Activated CD8-positive, alpha-beta T cell treated with anti-CD3 and anti-CD28 coated beads, Interleukin-2, amount 10 ng/mL, durations not matched to agents 7 days and 5 days (primary cell): ENCODE measurements at regions of chr19 and their contacts with region 1.

Region 1: DNA sequence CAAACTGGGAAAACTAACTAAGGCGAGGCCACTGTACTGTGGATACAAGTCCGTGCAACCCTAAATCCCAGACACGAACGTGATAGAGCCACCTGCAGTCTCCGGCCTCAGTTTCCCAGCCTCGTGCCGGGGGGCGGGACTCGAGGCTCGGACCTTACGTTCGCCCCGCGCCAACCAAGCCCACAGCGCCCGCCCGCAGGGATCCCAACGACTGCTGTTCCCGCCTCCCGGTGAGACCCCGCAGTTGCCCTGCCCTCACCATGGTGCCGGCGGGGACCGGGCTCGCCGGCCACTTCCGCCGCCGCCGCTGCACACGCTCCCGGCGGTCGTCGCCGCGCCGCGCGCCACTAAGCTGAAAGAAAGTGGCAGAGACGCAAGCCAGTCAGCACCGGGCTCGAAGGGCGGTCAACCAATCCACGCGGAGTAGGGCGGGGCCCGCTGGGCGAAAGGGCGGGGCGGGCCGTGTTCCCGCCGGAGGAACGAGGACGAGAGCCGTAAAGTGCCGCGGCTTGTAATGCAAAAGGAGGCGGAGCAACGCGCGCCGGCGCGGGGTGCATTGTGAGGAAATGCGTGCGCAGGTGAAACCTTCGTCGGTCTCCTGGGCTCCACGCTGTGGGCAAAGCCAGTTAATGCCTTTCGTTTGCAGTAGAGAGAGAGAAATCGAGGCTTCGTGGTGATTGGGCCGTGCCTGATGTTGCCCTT is at the start of gene LSM4:
- DNase-seq: peak; percentile 100
- ATAC-seq: peak; percentile 95
- H3K4me3 Mint-ChIP-seq: peak within 1 kb of the TSS; percentile 92
- H3K27ac Mint-ChIP-seq: peak within 1 kb of the TSS; percentile 93
- H3K4me1 Mint-ChIP-seq: peaks cover 56% of the 10 kb centered on the region
- H3K27me3 Mint-ChIP-seq: no peaks in the 10 kb centered on the region
- total RNA-seq, gene LSM4: 199 to 215 TPM

Region 2: GRCh38 chr19:18304458-18305310 is 18.2 kb before region 1 on chr19:
- CTCF ChIA-PET with region 1: interaction called, 36 read pairs
- POLR2A ChIA-PET with region 1: interaction called, 80 read pairs
- DNase-seq: peak; percentile 87
- ATAC-seq: peak; percentile 74
- H3K4me3 Mint-ChIP-seq: peak overlapping the region; percentile 99
- H3K27ac Mint-ChIP-seq: peak overlapping the region; percentile 94
- H3K4me1 Mint-ChIP-seq: peaks cover 49% of the 10 kb centered on the region
- H3K27me3 Mint-ChIP-seq: no peaks in the 10 kb centered on the region

Region 3: DNA sequence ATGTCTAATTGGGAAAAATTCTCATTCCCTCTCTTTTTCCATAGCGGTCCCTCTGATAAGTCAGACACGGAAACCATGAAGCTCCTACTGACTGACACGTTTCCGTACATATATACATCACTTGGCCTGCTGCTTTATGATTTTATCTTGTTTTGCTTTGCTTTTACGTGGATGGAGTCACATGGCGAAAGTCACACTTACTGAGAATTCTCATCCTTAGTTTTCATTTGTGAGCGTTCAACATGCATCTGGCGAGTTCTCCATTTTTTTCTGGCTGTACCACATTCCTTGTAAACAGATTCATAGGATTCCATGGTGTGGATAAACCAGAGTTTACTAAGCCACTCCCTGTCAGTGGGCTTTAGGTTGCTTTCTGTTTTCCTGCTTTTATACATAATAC is 38.7 kb after region 1 on chr19:
- CTCF ChIA-PET with region 1: no interaction called
- POLR2A ChIA-PET with region 1: no interaction called
- DNase-seq: no peak
- ATAC-seq: no peak
- H3K4me3 Mint-ChIP-seq: no peak overlapping the region
- H3K27ac Mint-ChIP-seq: no peak overlapping the region
- H3K4me1 Mint-ChIP-seq: peaks cover 18% of the 10 kb centered on the region
- H3K27me3 Mint-ChIP-seq: no peaks in the 10 kb centered on the region

Region 4: DNA sequence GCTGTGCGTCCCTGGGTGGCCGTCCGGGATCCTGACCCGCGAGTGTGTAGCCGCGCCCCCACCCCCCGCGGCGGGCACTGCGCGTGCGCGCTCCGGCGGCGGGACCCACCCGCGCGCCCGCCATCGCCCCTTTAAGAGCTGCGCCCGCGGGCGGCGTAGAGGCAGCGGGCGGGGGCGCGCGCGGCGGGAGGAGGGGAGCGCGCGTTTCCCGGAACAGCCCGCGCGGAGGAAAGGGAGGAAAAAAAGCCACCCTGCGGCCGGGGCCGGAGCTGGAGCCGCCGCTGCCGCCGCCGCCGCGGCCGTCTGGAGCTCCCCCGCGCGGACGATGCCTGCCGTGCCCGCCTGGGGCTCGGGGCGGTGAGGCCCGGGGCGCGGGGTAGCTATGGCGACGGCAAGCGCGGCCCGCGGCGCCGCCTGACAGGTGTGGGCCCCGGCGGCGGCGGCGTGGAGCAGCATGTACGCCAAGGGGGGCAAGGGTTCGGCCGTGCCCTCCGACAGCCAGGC is 96.3 kb after region 1 on chr19 and contains the start of gene SSBP4:
- CTCF ChIA-PET with region 1: interaction called, 3 read pairs
- POLR2A ChIA-PET with region 1: interaction called, 12 read pairs
- DNase-seq: peak; percentile 76
- ATAC-seq: peak; percentile 42
- H3K4me3 Mint-ChIP-seq: peak within 1 kb of the TSS; percentile 93
- H3K27ac Mint-ChIP-seq: peak within 1 kb of the TSS; percentile 94
- H3K4me1 Mint-ChIP-seq: peaks cover 83% of the 10 kb centered on the region
- H3K27me3 Mint-ChIP-seq: no peaks in the 10 kb centered on the region
- total RNA-seq, gene SSBP4: 198 to 204 TPM